ENCODE measurements at regions of chr12 and their contacts with region 1.

Region 1: GRCh38 chr12:91109148-91109564 is 2.1 kb downstream of the LUM start:
- DNase-seq: no peak
- H3K4me3 ChIP-seq: peak overlapping the region; percentile 58
- CTCF ChIP-seq: peak; percentile 47

Region 2: GRCh38 chr12:90706036-90706435 is 403.1 kb before region 1 on chr12:
- CTCF ChIA-PET with region 1: no interaction called
- POLR2A ChIA-PET with region 1: no interaction called
- DNase-seq: no peak
- H3K4me3 ChIP-seq: no peak overlapping the region
- CTCF ChIP-seq: no peak

Region 3: GRCh38 chr12:90987520-90987919 is 121.6 kb before region 1 on chr12:
- CTCF ChIA-PET with region 1: interaction called, 13 read pairs
- POLR2A ChIA-PET with region 1: no interaction called
- DNase-seq: no peak
- H3K4me3 ChIP-seq: no peak overlapping the region
- CTCF ChIP-seq: no peak

Region 4: DNA sequence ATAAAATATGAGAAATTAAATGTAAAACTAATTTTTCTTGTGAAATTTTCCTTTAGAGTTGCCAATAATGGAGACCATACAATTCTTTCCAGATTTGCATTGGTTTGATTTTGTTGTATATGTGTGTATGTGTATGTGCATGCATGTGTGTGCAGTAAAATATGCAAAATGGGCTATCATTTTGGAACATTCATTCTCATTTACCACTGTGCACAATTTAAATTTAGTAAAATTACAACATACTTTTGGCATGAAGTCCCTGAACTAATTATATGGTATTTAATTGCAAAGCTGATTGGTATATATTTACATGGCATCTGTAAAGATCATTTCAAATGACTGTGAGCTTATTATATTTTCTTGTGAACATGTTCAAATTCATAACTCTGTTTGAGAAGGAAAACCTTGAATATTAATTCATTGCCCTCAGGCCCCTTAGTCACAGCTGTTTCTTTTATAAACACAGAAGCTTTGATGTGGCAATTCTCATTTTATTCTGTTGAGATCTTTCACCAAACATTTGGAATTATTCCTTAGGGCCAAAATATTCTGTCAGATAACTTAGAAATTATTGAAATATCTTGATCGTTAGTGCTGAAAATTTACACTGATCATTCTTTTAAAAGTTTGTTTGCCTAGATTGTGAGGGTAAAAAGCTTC is 68.9 kb before region 1 on chr12:
- CTCF ChIA-PET with region 1: no interaction called
- POLR2A ChIA-PET with region 1: no interaction called
- DNase-seq: no peak
- H3K4me3 ChIP-seq: no peak overlapping the region
- CTCF ChIP-seq: no peak

Region 5: DNA sequence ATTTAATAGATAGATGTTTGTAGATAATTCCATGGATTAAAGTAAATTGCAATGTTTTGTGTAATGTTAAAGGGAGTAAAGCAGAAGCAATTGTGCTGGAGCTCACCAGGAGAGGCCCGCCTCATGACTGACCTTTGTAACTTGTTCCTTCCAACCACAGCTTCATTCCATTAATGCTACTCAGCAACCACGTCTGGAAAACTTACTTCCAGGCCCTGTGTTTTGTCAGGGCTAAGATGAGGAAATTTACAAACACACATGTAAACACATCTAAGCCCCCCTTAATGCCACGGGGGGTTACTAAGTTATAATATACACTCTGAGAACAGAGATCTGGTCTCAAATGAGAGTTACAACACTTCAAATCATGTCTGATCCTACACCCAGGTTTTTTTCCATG is 10.2 kb before region 1 on chr12:
- CTCF ChIA-PET with region 1: interaction called, 27 read pairs
- POLR2A ChIA-PET with region 1: interaction called, 6 read pairs
- DNase-seq: peak; percentile 78
- H3K4me3 ChIP-seq: no peak overlapping the region
- CTCF ChIP-seq: no peak

Region 6: DNA sequence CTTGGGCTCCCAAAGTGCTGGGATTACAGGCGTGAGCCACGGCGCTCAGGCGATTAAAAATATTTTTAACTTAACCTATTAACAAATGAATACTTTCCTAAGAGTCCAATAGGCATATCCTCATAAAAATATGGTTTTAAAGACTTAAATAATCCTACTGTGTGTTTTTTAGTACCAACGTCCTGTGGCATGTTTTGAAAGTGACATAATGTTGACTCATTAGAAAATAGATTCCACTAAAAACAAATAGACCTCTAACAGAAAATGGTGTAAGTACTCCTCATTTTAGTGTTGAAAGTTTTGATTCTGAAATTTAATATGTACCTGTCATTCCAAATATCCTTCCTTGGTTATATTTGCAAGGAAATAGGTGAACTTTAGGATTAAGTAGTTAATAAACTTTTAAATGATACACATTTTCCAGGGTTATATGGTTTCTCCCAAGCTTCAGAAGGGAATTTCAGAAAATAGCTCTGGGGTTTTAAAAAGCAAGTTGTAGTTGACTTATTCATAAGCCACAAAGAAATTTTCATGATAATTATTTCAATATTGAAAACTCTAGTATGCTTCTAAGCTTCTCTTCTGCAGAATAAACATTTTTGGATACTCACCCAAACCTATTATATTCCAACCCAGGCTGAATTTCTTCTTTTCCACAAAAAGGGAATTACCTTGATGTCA is 14.2 kb after region 1 on chr12:
- CTCF ChIA-PET with region 1: interaction called, 24 read pairs
- POLR2A ChIA-PET with region 1: no interaction called
- DNase-seq: no peak
- H3K4me3 ChIP-seq: no peak overlapping the region
- CTCF ChIP-seq: no peak

Region 7: DNA sequence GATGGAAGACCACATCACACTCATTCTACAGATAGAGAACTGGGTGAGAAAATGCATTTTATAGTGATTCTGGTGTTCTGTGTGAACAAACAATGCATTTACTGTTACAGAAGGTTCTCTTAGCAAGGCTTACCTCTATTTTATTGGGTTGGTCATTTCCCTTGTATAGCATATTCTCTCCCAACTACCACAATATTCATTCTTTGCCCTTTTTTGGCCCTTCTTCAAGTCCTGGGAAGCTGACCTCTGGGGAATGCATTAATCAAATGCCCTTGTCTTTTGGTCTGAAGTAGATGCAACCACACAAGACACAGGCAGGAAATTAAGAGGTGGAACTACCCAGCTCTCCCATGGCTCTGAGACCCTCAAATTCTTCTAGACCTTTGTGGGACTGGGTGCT is 54.0 kb after region 1 on chr12:
- CTCF ChIA-PET with region 1: no interaction called
- POLR2A ChIA-PET with region 1: no interaction called
- DNase-seq: no peak
- H3K4me3 ChIP-seq: no peak overlapping the region
- CTCF ChIP-seq: no peak

Region 8: DNA sequence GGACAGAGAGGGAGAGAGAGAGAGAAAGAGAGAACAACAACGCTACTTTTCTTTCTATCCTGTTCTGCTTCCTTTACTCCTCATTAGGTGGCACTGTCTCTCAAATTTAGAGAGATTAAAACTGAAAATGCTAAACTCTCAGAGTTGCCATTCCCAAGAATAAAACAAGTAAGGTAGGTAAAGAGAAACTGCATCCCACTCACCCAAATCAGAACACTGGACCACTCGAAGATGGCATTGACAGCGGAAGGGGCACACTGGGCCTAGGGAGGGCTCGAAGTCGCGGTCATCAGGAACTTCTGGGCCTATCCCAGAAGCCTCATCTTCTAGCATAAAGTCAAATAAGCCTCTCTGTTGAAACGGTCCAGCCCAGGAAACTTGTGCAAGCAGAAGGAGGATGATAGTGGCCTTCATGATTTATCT is 69.0 kb after region 1 on chr12:
- CTCF ChIA-PET with region 1: interaction called, 10 read pairs
- POLR2A ChIA-PET with region 1: no interaction called
- DNase-seq: no peak
- H3K4me3 ChIP-seq: peak overlapping the region; percentile 40
- CTCF ChIP-seq: peak; percentile 41